Gastrocnemius medialis (tissue), 4 donors: ENCODE measurements at regions of chr20 and their contacts with region 1.

Region 1: DNA sequence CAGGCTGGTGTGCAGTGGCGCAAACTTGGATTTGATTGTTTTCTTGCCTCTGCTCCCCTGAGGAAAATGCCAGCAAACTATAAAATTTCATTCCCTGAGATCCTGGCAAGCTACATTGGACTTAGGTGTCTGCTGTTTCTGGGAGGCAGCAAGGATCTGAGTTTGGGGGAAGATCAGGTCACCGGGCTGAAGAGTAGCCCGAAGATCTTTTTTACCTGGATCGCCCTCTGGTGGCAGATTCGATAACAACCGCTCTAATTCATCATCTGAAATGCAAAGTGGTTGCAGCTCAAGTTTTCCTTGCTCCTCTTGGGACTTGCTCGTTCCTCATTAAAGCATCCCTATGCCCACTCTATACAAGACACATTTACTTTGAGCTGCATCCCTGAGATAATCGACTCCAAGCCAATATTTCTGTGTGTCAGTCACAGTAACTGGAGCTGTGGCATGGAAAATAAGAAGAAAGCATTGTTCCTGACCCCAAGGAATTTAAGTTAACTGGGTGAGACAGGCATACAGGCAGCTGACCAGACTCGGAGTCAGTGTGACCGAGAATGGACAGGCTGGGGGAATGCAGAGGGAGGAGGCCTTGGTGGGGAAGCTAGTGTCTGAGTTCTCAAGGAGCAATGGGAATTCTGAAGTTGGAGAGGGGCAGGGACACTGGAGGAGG is 131.8 kb upstream of the PROKR2 start:
- DNase-seq: no peak
- ATAC-seq: peak in 1 of 2 donors; percentile 51
- H3K4me3 ChIP-seq: no peak overlapping the region
- H3K27ac ChIP-seq: no peak overlapping the region
- H3K4me1 ChIP-seq: no peaks in the 10 kb centered on the region
- H3K27me3 ChIP-seq: no peaks in the 10 kb centered on the region
- CTCF ChIP-seq: peak in 3 of 5 experiments; percentile 41 to 57 (median 53)
- POLR2A ChIP-seq: no peak

Region 2: DNA sequence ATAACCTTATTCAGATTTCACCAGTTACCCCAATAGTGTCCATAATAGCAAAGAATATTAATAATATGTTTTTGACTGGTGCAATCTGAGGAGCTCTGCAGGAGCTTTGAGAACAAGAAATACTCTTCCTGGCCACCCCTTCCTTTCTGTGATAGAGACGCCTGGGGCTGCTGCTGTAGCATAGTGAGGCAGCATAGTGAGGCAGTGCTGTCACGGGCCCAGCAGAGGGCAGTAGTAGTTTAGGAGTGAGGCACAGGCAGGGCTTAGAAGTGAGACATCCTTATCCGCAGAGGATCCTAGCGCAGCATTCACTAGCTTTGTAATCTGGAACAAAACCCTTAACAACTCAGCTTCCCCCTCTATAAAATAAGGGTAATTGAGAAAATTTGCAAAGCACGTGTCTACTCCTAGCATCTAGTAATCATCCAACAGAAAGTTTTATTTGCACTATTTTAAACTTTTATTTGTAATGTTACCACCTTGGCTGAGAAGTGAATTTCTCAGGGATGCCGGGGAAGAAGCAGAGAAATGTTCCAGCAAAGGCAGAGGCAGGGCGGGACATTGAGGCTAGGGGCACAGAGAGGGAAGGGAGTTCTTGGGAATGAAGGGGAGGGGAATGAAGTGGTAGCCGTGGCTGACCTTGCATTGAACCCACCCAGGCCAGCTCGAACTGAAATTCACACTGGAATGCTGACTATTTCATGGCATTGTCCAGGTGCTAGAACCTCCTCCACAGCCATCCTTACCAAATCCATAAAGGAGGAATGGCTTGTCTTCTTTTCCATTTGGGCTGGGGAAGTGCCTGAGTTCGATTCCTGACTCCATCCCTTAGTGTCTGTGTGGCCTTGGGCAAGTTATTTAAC is 243.0 kb before region 1 on chr20:
- in situ Hi-C with region 1: no loop called
- intact Hi-C with region 1: loop called (anchors 5 kb)
- DNase-seq: peak; percentile 32 to 57
- ATAC-seq: peak; percentile 56 to 94
- H3K4me3 ChIP-seq: no peak overlapping the region
- H3K27ac ChIP-seq: no peak overlapping the region
- H3K4me1 ChIP-seq: no peaks in the 10 kb centered on the region
- H3K27me3 ChIP-seq: no peaks in the 10 kb centered on the region
- CTCF ChIP-seq: peak; percentile 28 to 78 (median 64)
- POLR2A ChIP-seq: no peak

Region 3: GRCh38 chr20:5513975-5514516 is 65.5 kb after region 1 on chr20:
- in situ Hi-C with region 1: no loop called
- intact Hi-C with region 1: no loop called
- DNase-seq: no peak
- ATAC-seq: no peak
- H3K4me3 ChIP-seq: no peak overlapping the region
- H3K27ac ChIP-seq: no peak overlapping the region
- H3K4me1 ChIP-seq: no peaks in the 10 kb centered on the region
- H3K27me3 ChIP-seq: no peaks in the 10 kb centered on the region
- CTCF ChIP-seq: no peak
- POLR2A ChIP-seq: no peak